Activated T-helper 1 cell treated with anti-CD3 and anti-CD28 coated beads, Interleukin-12 subunit alpha, Interleukin-12 subunit beta, Interleukin-2, Interleukin-4 antibody, amounts not matched to agents 30 ng/mL and 10 ng/mL and 1 ng/mL, durations not matched to agents 14 hours and 24 hours and 36 hours (primary cell): ENCODE measurements at regions of chr3 and their contacts with region 1.

Region 1: GRCh38 chr3:111539351-111540331 is 2.4 kb upstream of the CD96 start:
- DNase-seq: peak; percentile 36
- H3K4me3 Mint-ChIP-seq: peak overlapping the region; percentile 77
- H3K27ac Mint-ChIP-seq: peak overlapping the region; percentile 80
- H3K4me1 Mint-ChIP-seq: peaks cover 75% of the 10 kb centered on the region
- H3K27me3 Mint-ChIP-seq: no peaks in the 10 kb centered on the region

Region 2: DNA sequence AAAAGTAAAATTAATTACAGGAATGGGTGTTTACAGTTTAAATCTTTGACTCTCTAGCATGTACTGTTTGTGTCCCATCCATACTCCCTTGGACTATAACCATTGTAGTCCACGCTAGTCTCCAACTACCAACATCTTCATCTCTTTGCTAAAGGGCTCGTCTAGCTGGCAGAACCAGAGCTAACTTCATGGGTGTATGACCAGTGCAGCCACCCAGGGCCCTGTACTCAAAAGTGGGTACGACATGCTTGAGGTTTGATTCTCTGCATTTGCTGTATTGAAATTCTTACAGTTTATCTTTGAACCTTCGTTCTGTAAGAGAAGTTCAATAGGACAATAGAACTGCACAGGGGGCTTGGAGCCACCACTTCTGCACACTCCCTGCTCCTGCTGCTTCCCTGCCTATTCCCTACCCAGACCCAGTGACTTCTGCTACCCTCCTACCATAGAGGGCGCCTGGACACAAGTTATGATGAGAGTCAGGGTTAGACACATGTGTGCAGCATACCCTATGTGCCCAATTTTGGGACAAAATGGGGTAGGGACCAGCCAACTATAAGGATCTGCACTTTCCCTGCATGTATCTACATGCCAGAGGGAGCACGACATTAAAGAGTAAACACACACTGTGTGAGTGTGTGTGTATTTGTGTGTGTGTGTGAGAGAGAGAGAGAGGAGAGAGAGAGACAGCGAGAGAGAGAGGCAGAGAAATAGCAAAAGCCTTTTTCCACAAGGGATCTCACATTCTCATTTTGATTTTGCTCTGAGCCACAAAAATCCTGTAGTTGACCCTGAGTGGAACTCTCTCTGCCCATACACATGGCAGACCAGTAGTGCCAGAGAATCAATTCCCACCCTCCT is 527.0 kb before region 1 on chr3:
- intact Hi-C with region 1: loop called (anchors 1 kb)
- DNase-seq: no peak
- H3K4me3 Mint-ChIP-seq: no peak overlapping the region
- H3K27ac Mint-ChIP-seq: no peak overlapping the region
- H3K4me1 Mint-ChIP-seq: no peaks in the 10 kb centered on the region
- H3K27me3 Mint-ChIP-seq: no peaks in the 10 kb centered on the region

Region 3: DNA sequence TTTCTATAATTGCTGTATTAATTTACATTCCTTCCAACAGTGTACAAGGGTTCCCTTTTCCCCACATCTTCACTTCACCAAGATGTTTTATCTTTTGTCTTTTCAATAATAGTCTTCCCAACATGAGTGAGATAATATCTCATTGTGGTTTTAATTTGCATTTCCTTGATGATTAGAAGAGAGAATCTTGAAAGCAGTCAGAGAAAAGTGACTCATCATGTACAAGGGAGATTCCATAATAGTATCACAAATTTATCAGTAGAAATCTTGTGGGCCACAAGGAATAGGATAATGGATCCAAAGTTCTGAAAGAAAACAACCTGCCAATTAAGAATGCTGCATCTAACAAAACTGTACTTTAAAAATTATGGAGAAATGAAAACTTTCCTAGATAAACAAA is 278.8 kb before region 1 on chr3:
- intact Hi-C with region 1: loop called (anchors 2 kb)
- DNase-seq: no peak
- H3K4me3 Mint-ChIP-seq: peak overlapping the region; percentile 5
- H3K27ac Mint-ChIP-seq: peak overlapping the region; percentile 51
- H3K4me1 Mint-ChIP-seq: peaks cover 28% of the 10 kb centered on the region
- H3K27me3 Mint-ChIP-seq: peaks cover 7% of the 10 kb centered on the region

Region 4: GRCh38 chr3:111338059-111338698 is 201.5 kb before region 1 on chr3:
- intact Hi-C with region 1: loop called (anchors 5 kb)
- DNase-seq: peak; percentile 12
- H3K4me3 Mint-ChIP-seq: no peak overlapping the region
- H3K27ac Mint-ChIP-seq: no peak overlapping the region
- H3K4me1 Mint-ChIP-seq: peaks cover 26% of the 10 kb centered on the region
- H3K27me3 Mint-ChIP-seq: no peaks in the 10 kb centered on the region

Region 5: GRCh38 chr3:111595232-111595631 is 55.6 kb after region 1 on chr3 and contains the start of gene ZBED2:
- intact Hi-C with region 1: loop called (anchors 1 kb)
- DNase-seq: no peak
- H3K4me3 Mint-ChIP-seq: peak within 1 kb of the TSS; percentile 97
- H3K27ac Mint-ChIP-seq: peak within 1 kb of the TSS; percentile 99
- H3K4me1 Mint-ChIP-seq: peaks cover 65% of the 10 kb centered on the region
- H3K27me3 Mint-ChIP-seq: no peaks in the 10 kb centered on the region
- total RNA-seq, gene ZBED2: 812 and 827 TPM in 2 replicates

Region 6: DNA sequence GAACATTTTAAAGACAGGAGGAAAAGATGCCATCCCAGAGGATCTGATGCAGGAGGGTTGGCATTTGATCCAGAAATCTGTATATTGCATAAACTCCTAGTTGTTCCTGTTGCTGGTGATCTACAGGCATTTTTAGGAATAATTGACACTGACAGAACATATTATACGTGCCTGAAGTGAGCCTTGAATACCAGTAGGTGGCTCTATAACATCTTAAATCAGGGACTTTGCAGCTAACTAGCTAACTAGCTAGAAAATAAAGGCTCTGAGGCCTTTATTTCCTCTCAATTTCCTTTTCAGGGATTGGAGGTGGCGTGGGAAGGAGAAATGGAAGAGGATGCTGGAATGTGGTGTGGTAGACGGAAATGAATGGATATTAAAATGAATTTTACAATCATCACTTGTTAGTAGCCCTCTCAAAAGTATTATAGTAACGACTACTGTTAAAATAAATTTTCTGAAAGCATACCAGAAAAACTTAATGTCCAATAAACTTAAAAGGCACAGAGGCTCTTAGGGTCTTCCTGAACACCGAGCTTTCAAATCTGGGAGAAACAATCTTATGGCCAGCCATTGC is 129.4 kb after region 1 on chr3:
- intact Hi-C with region 1: loop called (anchors 1 kb)
- DNase-seq: no peak
- H3K4me3 Mint-ChIP-seq: no peak overlapping the region
- H3K27ac Mint-ChIP-seq: peak overlapping the region; percentile 63
- H3K4me1 Mint-ChIP-seq: peaks cover 85% of the 10 kb centered on the region
- H3K27me3 Mint-ChIP-seq: no peaks in the 10 kb centered on the region